Cardiac septum (tissue), 1 donor: ENCODE measurements at regions of chr13 and their contacts with region 1.

Region 1: DNA sequence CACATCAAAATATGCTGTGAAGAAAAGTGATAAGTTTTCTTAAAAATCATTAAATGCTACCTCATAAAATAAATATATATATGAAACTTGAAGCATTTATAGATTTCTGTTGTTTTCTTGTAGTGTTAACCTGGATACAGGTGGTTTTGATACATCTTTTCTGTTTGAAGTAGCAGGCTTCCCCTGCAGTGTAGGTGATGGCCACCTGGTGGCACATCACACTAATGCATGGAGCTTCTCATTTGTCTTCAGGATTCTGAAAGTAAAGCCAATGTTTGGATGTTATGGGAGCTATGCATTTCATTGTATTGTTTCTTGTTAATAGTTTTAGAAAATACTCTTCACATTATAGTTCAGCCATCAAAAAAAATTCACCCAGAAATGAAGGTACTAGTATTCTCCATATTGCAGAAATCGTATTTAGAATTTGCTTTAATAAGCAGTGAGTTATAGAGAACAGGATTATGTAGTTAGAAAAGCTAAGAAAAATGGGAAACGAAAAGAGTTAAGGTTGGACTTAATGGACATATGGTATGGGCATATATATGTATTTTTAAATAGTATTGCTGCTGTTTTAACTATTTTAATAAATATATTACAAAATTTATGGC is 18.7 kb downstream of the GPR180 start:
- DNase-seq: no peak

Region 2: DNA sequence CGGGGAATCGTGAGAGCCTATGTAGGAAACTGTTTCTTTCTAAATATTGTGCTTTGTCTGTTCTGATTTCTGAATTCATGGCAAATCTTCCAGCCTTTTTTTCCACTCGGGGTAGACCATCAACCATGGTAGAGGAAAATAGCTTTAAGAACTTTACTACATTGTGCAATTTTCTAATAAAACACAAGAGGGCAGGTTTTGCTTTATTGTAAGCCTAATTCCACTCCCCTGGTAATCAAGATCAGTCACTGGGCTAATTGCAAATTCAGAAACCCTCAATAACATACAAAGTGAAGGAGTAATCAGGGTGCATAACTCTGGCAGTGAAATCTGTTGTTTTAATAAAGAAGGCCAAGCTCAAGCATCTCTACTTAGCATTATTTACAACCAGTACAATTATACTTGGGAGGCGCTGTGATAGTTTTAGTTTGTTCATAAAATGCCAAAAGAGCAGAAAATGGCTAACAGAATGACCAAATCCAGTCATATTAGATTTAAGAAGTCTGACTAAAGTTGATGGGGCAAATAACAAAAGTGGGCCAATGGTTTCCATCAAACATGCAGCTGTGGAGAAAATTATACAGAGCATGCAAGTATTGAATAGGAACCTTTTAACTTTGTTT is 184.7 kb before region 1 on chr13:
- intact Hi-C with region 1: loop called (anchors 2 kb)
- DNase-seq: no peak